Activated CD4-positive, alpha-beta T cell treated with anti-CD3 and anti-CD28 coated beads for 36 hours (primary cell): ENCODE measurements at regions of chr20 and their contacts with region 1.

Region 1: GRCh38 chr20:21505161-21505809 is 8.6 kb downstream of the NKX2-2 start:
- DNase-seq: peak; percentile 90
- ATAC-seq: peak; percentile 70
- H3K4me3 Mint-ChIP-seq: peak overlapping the region; percentile 52
- H3K27ac Mint-ChIP-seq: peak overlapping the region; percentile 8
- H3K4me1 Mint-ChIP-seq: peaks cover 25% of the 10 kb centered on the region
- H3K27me3 Mint-ChIP-seq: peaks cover 52% of the 10 kb centered on the region

Region 2: DNA sequence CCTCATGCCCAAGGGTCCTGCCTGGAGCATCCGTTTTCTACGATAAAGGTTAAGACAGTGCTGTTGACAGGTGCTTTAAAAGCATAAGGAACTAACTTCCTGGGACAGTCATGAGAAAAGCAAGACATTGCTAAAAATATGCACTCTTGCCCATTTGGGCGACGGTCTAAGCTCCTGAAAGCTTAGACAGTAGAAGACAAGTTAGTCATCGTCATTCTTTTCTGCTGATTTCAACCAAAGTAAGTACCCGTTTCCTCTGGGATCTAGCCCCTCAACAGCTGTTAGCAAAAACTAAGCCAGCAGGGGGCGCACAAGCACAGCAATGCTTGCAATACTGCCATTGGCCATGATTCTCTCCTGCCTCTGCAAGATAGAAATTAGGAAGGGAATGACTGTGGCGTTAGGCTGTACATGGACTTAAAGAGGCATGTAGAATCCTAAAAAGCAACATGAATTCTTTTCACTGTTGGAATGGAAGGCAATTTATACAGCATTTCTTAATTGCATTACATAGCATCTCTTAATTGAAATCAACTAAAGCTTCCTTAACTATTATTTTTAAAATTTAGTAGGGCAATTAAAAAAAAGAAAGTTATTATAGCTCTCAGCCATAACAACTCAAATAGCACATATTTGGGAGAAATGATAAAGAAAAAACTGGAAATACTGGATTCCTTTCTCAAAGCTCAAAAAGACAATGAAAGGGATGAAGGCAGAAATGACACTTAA is 645.0 kb before region 1 on chr20:
- CTCF ChIA-PET with region 1: interaction called, 22 read pairs
- POLR2A ChIA-PET with region 1: no interaction called
- intact Hi-C with region 1: loop called (anchors 1 to 2 kb)
- DNase-seq: peak; percentile 94
- ATAC-seq: peak; percentile 93
- H3K4me3 Mint-ChIP-seq: no peak overlapping the region
- H3K27ac Mint-ChIP-seq: no peak overlapping the region
- H3K4me1 Mint-ChIP-seq: no peaks in the 10 kb centered on the region
- H3K27me3 Mint-ChIP-seq: peaks cover 19% of the 10 kb centered on the region

Region 3: GRCh38 chr20:21105429-21106170 is 399.7 kb before region 1 on chr20:
- CTCF ChIA-PET with region 1: no interaction called
- POLR2A ChIA-PET with region 1: no interaction called
- intact Hi-C with region 1: loop called (anchors 2 kb)
- DNase-seq: peak; percentile 31
- ATAC-seq: no peak
- H3K4me3 Mint-ChIP-seq: no peak overlapping the region
- H3K27ac Mint-ChIP-seq: no peak overlapping the region
- H3K4me1 Mint-ChIP-seq: peaks cover 23% of the 10 kb centered on the region
- H3K27me3 Mint-ChIP-seq: peaks cover 62% of the 10 kb centered on the region

Region 4: GRCh38 chr20:21520702-21521595 is 15.7 kb after region 1 on chr20:
- CTCF ChIA-PET with region 1: interaction called, 38 read pairs
- POLR2A ChIA-PET with region 1: interaction called, 3 read pairs
- intact Hi-C with region 1: loop called in 1 of 2 experiments (anchors 2 kb)
- DNase-seq: peak; percentile 23
- ATAC-seq: no peak
- H3K4me3 Mint-ChIP-seq: no peak overlapping the region
- H3K27ac Mint-ChIP-seq: no peak overlapping the region
- H3K4me1 Mint-ChIP-seq: peaks cover 26% of the 10 kb centered on the region
- H3K27me3 Mint-ChIP-seq: peaks cover 86% of the 10 kb centered on the region

Region 5: DNA sequence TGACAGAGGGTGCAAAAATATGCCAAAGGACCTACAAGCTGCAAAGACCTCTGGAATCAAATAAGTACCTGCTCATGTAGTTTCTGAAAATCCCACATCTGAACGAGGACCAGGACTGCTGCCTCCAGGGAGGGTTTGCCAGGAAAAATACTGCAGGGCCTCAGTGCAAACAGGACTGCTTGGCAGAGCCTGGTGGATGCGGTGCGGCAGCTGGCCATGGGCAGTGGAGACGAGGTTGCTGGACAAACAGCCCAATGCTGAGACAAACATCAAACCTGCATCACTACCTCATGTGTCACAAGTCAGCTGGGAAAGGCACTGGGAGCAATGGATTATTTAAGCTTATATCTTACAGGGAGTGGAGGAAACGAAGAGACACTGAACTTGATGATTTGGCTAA is 438.9 kb after region 1 on chr20:
- CTCF ChIA-PET with region 1: no interaction called
- POLR2A ChIA-PET with region 1: no interaction called
- intact Hi-C with region 1: no loop called
- DNase-seq: no peak
- ATAC-seq: no peak
- H3K4me3 Mint-ChIP-seq: no peak overlapping the region
- H3K27ac Mint-ChIP-seq: no peak overlapping the region
- H3K4me1 Mint-ChIP-seq: no peaks in the 10 kb centered on the region
- H3K27me3 Mint-ChIP-seq: no peaks in the 10 kb centered on the region

Region 6: GRCh38 chr20:22575087-22575721 is 1069.9 kb after region 1 on chr20:
- CTCF ChIA-PET with region 1: no interaction called
- POLR2A ChIA-PET with region 1: no interaction called
- intact Hi-C with region 1: loop called (anchors 5 to 10 kb)
- DNase-seq: no peak
- ATAC-seq: no peak
- H3K4me3 Mint-ChIP-seq: no peak overlapping the region
- H3K27ac Mint-ChIP-seq: no peak overlapping the region
- H3K4me1 Mint-ChIP-seq: no peaks in the 10 kb centered on the region
- H3K27me3 Mint-ChIP-seq: peaks cover 69% of the 10 kb centered on the region